Activated naive CD4-positive, alpha-beta T cell treated with anti-CD3 and anti-CD28 coated beads, Interleukin-2, amount 10 ng/mL, durations not matched to agents 7 days and 5 days (primary cell): ENCODE measurements at regions of chr19 and their contacts with region 1.

Region 1: DNA sequence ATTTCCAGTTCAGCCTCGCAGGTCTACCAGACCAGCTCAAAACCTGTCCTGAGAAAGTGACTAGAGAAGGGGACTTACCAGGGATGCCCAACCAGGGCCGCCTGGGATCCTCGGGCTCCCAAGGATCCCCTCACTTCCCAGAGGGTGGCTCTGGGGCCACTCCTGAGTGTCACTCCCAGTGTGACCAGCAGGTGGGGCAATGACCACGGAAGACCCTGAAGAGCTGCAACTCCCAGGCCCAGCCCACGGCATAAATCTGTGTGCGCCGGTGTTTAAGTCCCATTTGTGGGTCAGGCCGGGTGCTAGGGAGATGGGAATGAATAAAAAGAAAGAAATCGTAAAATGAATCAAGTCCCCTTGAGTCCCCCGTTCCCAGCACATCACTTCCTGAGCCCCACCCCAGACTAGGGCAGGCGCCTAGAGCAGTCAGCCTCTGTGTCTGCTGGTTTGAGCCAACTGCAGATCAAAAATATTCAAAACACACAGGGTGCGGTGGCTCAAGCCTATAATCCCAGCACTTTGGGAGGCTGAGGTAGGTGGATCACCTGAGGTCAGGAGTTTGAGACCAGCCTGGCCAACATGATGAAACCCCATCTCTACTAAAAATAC is 10.7 kb downstream of the PTGIR start:
- DNase-seq: peak; percentile 87
- H3K4me3 Mint-ChIP-seq: no peak overlapping the region
- H3K27ac Mint-ChIP-seq: peak overlapping the region; percentile 80
- H3K4me1 Mint-ChIP-seq: peaks cover 79% of the 10 kb centered on the region
- H3K27me3 Mint-ChIP-seq: no peaks in the 10 kb centered on the region

Region 2: DNA sequence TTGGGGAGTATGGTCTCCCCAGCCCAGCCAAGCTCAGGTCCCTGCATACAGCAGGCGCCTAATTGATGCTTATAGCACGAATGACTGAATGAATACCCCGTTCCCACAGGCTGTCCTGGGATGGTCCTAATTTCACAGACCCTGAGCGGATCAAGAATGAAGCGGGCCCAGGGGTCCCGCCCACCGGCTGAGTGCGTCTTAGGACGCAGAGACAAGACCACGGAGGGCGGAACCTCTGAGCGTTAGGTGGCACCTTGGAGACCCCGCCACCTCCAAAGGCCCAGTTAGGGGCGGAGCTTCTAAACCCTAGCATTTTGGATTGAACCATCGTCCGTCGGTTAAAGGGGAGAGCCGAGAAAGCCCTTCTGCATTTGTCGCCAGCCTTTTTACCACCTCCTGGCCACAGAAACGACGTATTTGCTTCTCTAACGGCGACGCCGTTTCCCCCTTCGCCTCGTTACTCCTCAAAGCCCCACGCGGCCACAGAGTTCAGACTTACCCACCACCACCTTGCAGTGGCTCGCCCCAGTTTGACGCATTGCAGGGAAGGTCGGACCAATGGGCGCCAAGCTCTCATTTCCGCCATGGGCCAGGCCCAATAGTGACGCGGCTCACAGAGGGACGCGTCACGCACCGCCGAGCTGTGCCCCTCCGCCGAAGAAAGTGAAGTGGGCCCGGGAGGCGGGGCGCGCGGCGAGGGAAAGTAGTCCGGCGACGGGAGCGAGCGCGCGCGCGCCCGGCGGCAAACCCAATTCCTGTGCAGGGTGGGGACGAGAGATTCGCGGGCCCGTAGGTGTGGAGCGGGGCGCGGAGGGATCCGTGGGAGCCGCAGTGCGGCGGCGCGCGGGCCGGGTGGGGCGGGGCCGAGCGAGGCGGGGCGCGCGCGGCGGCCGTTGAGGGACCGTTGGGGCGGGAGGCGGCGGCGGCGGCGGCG is 13.6 kb before region 1 on chr19:
- CTCF ChIA-PET with region 1: interaction called, 33 read pairs
- DNase-seq: peak; percentile 97
- H3K4me3 Mint-ChIP-seq: peak overlapping the region; percentile 100
- H3K27ac Mint-ChIP-seq: peak overlapping the region; percentile 100
- H3K4me1 Mint-ChIP-seq: peaks cover 47% of the 10 kb centered on the region
- H3K27me3 Mint-ChIP-seq: peaks cover 34% of the 10 kb centered on the region

Region 3: GRCh38 chr19:46624958-46625661 is 10.9 kb after region 1 on chr19 and contains the start of gene PTGIR:
- CTCF ChIA-PET with region 1: interaction called, 15 read pairs
- DNase-seq: peak; percentile 52
- H3K4me3 Mint-ChIP-seq: peak within 1 kb of the TSS; percentile 73
- H3K27ac Mint-ChIP-seq: peak within 1 kb of the TSS; percentile 84
- H3K4me1 Mint-ChIP-seq: peaks cover 57% of the 10 kb centered on the region
- H3K27me3 Mint-ChIP-seq: peaks cover 4% of the 10 kb centered on the region

Region 4: GRCh38 chr19:46631481-46631880 is 17.3 kb after region 1 on chr19:
- CTCF ChIA-PET with region 1: interaction called, 12 read pairs
- DNase-seq: no peak
- H3K4me3 Mint-ChIP-seq: no peak overlapping the region
- H3K27ac Mint-ChIP-seq: no peak overlapping the region
- H3K4me1 Mint-ChIP-seq: peaks cover 27% of the 10 kb centered on the region
- H3K27me3 Mint-ChIP-seq: peaks cover 52% of the 10 kb centered on the region